ENCODE measurements at regions of chr1 and their contacts with region 1.

Region 1: DNA sequence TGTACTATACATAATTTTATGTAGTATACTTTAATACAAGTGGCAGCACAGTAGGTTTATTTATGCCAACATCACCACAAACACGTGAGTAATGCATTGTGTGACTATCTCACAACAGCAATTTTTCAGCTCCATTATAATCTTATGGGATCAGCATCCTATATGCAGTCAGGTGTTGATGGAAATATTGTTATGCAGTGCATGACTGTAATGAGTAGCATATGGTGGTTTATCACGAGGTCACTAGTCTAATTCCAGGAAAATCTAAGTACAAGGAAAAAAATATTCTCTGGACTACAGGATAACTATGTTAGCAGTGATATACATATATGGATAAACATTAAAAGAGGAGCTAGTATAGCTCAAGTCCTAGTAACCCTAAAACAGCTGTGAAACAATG is 69.0 kb downstream of the ATP1B1 start:
- DNase-seq: no peak
- ATAC-seq: no peak
- H3K4me3 ChIP-seq: no peak overlapping the region
- H3K27ac ChIP-seq: no peak overlapping the region
- H3K4me1 ChIP-seq: no peaks in the 10 kb centered on the region
- H3K27me3 ChIP-seq: no peaks in the 10 kb centered on the region
- CTCF ChIP-seq: no peak
- POLR2A ChIP-seq: no peak

Region 2: GRCh38 chr1:168932539-168932938 is 242.9 kb before region 1 on chr1:
- in situ Hi-C with region 1: no loop called
- intact Hi-C with region 1: no loop called
- DNase-seq: no peak
- ATAC-seq: no peak
- H3K4me3 ChIP-seq: no peak overlapping the region
- H3K27ac ChIP-seq: no peak overlapping the region
- H3K4me1 ChIP-seq: no peaks in the 10 kb centered on the region
- H3K27me3 ChIP-seq: no peaks in the 10 kb centered on the region
- CTCF ChIP-seq: no peak
- POLR2A ChIP-seq: no peak

Region 3: GRCh38 chr1:169155675-169156074 is 19.8 kb before region 1 on chr1:
- in situ Hi-C with region 1: no loop called
- intact Hi-C with region 1: loop called (anchors 1 kb)
- DNase-seq: no peak
- ATAC-seq: no peak
- H3K4me3 ChIP-seq: no peak overlapping the region
- H3K27ac ChIP-seq: no peak overlapping the region
- H3K4me1 ChIP-seq: no peaks in the 10 kb centered on the region
- H3K27me3 ChIP-seq: no peaks in the 10 kb centered on the region
- CTCF ChIP-seq: no peak
- POLR2A ChIP-seq: no peak

Region 4: GRCh38 chr1:169367486-169368405 is 192.3 kb after region 1 on chr1 and contains the starts of genes BLZF1 and NME7:
- in situ Hi-C with region 1: no loop called
- intact Hi-C with region 1: no loop called
- DNase-seq: peak; percentile 93 to 94
- ATAC-seq: peak; percentile 99
- H3K4me3 ChIP-seq: peak within 1 kb of the TSS; percentile 66 to 90 (median 74)
- H3K27ac ChIP-seq: peak within 1 kb of the TSS; percentile 80 to 89 (median 86)
- H3K4me1 ChIP-seq: peaks cover 15 to 18% of the 10 kb centered on the region in 2 donors
- H3K27me3 ChIP-seq: no peaks in the 10 kb centered on the region
- CTCF ChIP-seq: no peak
- POLR2A ChIP-seq: peak; percentile 43
- total RNA-seq, gene BLZF1: 10.2 to 17.7 (median 14.6) TPM
- total RNA-seq, gene NME7: 3.7 to 8.4 (median 5.5) TPM